ENCODE measurements at regions of chr12 and their contacts with region 1.

Region 1: DNA sequence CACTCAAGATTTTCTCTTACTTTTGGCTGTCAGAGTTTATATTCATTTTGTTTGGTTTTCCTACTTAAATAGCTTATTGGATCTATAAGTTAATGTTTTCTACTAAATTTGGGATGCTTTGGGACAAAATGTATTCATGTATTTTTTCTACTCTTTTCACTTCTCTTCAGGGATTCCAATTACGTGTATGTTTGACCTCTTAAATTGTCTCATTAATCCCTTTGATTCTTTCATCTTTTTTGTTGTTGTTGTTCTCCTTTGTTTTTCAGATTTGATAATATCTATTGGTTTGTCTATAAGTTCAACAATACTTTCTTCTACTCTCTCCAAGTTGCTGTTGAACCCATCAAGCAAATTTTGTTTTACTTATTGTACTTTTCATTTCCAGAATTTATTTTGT is 34.2 kb downstream of the PMCH start:
- DNase-seq: no peak
- H3K4me3 ChIP-seq: no peak overlapping the region
- H3K27ac ChIP-seq: no peak overlapping the region
- H3K4me1 ChIP-seq: no peaks in the 10 kb centered on the region
- H3K27me3 ChIP-seq: no peaks in the 10 kb centered on the region
- CTCF ChIP-seq: no peak
- EP300 ChIP-seq: no peak
- POLR2A ChIP-seq: no peak

Region 2: DNA sequence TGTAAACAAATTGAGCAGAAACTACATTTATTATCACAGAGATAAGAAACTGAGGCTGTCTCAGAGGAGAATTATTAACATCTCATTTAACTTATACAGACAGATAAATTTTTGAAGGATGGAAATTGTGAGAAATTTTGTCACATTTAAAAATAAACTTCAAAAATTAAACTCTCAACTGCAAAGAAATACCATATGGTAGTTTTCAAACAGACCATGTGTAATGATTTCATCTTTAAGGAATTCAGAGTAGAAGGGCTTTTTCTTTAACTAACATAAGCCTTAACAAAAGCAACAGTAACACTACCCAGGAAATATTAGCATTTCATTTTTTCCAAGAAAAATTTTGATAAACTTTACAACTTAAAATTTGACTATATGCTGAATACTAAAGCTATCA is 70.1 kb before region 1 on chr12:
- in situ Hi-C with region 1: no loop called
- intact Hi-C with region 1: loop called (anchors 2 kb)
- DNase-seq: no peak
- H3K4me3 ChIP-seq: no peak overlapping the region
- H3K27ac ChIP-seq: no peak overlapping the region
- H3K4me1 ChIP-seq: no peaks in the 10 kb centered on the region
- H3K27me3 ChIP-seq: no peaks in the 10 kb centered on the region
- CTCF ChIP-seq: no peak
- EP300 ChIP-seq: no peak
- POLR2A ChIP-seq: no peak

Region 3: DNA sequence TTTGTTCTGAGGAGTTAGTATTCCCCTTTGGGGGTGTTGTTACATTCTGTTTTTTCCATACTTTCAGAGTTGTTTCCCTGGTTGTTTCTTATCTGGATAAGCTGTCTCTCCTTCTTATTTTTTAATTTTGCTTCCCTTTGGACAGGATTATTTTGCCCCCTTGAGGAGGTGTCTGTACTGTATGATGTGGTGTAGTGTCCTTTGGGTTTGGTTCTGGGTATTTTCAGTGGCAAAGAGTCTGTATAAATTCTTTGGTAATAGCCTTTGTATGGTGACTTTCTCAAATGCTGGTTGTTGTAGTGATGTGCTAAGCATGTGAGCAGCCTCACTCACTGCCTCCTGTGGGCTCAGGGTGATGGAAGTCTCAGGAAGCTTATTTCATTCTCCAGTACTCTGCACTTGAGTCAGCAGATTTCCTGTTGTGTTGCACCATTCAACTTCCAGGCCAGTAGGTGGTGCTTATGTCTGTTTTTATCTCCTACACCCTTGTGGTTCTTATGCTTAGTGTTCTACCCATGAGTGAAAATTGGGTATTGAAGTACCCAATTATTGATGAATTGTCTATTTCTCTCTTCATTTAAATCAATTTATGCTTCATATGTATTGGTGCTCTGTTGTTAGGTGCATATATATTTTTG is 137.6 kb after region 1 on chr12:
- in situ Hi-C with region 1: no loop called
- intact Hi-C with region 1: no loop called
- DNase-seq: no peak
- H3K4me3 ChIP-seq: no peak overlapping the region
- H3K27ac ChIP-seq: no peak overlapping the region
- H3K4me1 ChIP-seq: no peaks in the 10 kb centered on the region
- H3K27me3 ChIP-seq: no peaks in the 10 kb centered on the region
- CTCF ChIP-seq: peak in 1 of 5 experiments; percentile 12
- EP300 ChIP-seq: no peak
- POLR2A ChIP-seq: no peak